ENCODE measurements at regions of chr17 and their contacts with region 1.

Region 1: DNA sequence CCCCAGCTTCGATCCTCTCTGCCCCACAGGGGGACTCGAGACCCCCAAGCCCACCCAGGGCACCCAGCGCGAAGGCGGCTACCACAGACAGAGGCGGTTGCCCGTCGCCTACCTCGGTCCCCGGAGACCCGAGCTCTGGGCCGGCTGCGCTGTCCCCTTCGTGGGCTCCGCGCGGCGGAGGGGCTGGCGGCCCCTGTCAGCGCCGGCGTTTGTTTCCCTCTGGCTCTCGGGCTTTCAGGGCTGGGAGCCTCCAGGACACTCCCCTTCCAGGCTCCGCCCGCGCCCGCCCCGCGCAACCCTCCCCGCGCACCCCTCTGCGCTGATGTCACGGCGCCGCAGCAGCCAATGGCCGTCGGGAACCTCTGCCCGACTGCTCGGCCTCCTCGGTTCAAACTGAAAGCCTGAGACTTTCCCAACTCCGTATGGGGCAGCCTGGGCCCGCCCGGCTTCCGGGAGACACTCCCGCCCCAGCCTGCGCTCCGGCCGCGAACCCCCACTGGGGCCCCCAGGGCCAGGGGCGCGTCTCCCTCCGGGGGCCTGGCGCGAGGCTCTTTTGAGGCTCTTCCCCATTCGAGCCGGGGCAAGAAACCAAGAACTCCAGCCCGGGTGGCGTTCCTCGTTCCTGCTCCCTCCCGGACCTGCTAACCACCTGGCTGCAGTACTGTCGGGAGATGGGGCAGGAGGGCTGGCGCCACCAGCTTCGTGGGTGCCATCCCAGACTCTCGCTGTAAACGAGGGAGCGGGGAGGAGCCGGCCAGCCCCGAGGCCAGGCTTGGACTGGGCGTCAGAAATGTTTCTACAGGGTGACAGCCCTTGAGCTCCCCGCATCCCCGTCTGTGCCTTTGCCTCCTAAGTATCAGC is at the start of gene CDC42EP4:
- DNase-seq: peak; percentile 96
- H3K4me3 ChIP-seq: peak within 1 kb of the TSS; percentile 68 to 94 (median 88)
- H3K27ac ChIP-seq: peak within 1 kb of the TSS; percentile 88
- H3K4me1 ChIP-seq: peaks cover 30% of the 10 kb centered on the region
- H3K27me3 ChIP-seq: no peaks in the 10 kb centered on the region
- CTCF ChIP-seq: no peak
- total RNA-seq, gene CDC42EP4: 21.4 to 25.3 TPM

Region 2: GRCh38 chr17:73192894-73193701 is 118.9 kb before region 1 on chr17 and contains the start of gene COG1:
- CTCF ChIA-PET with region 1: no interaction called
- dilution Hi-C with region 1: no loop called
- in situ Hi-C with region 1: no loop called
- intact Hi-C with region 1: loop called (anchors 5 kb)
- DNase-seq: peak; percentile 86
- H3K4me3 ChIP-seq: peak within 1 kb of the TSS; percentile 73 to 96 (median 80)
- H3K27ac ChIP-seq: peak within 1 kb of the TSS; percentile 57
- H3K4me1 ChIP-seq: peaks cover 4% of the 10 kb centered on the region
- H3K27me3 ChIP-seq: no peaks in the 10 kb centered on the region
- CTCF ChIP-seq: no peak
- total RNA-seq, gene COG1: 23.3 to 35.2 TPM

Region 3: GRCh38 chr17:73255671-73256181 is 56.3 kb before region 1 on chr17:
- CTCF ChIA-PET with region 1: interaction called, 8 read pairs
- dilution Hi-C with region 1: no loop called
- in situ Hi-C with region 1: no loop called
- intact Hi-C with region 1: loop called (anchors 1 kb)
- DNase-seq: peak; percentile 53
- H3K4me3 ChIP-seq: no peak overlapping the region
- H3K27ac ChIP-seq: no peak overlapping the region
- H3K4me1 ChIP-seq: no peaks in the 10 kb centered on the region
- H3K27me3 ChIP-seq: no peaks in the 10 kb centered on the region
- CTCF ChIP-seq: peak; percentile 93 to 99

Region 4: GRCh38 chr17:73261952-73262675 is 49.9 kb before region 1 on chr17:
- CTCF ChIA-PET with region 1: no interaction called
- dilution Hi-C with region 1: no loop called
- in situ Hi-C with region 1: no loop called
- intact Hi-C with region 1: loop called (anchors 2 kb)
- DNase-seq: peak; percentile 71
- H3K4me3 ChIP-seq: peak overlapping the region in 1 of 3 experiments; percentile 16
- H3K27ac ChIP-seq: peak overlapping the region; percentile 35
- H3K4me1 ChIP-seq: peaks cover 16% of the 10 kb centered on the region
- H3K27me3 ChIP-seq: no peaks in the 10 kb centered on the region
- CTCF ChIP-seq: no peak

Region 5: DNA sequence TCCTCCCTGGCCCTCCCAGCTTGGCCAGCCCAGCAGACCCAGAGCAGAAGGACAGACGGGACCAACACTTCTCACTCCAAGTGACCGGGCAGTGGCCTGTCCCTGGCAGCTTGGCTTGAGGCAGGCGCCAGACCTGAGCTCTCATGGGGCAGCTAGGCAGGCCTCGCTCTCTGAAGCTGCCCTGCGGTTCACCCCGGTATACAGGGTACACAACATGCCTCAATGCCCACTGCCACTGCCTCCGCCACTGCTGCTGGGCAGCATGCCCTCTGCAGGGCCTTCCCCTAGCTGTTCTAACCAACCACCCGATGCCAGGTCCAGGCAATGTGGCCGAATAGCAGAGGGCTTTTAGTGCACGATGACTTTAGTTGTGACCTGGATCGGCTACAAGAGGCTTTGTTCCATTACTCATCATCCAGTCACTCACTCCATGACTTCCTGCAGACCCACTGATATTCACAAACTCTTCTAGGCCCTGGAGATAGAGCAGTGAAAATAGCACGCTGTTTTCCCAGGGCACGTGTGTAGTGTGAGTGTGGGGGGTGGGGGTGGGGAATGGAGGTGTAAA is 20.0 kb before region 1 on chr17:
- CTCF ChIA-PET with region 1: interaction called, 5 read pairs
- dilution Hi-C with region 1: no loop called
- in situ Hi-C with region 1: no loop called
- intact Hi-C with region 1: loop called (anchors 2 kb)
- DNase-seq: peak; percentile 60
- H3K4me3 ChIP-seq: peak overlapping the region in 2 of 3 experiments; percentile 7 to 15
- H3K27ac ChIP-seq: peak overlapping the region; percentile 66
- H3K4me1 ChIP-seq: peaks cover 51% of the 10 kb centered on the region
- H3K27me3 ChIP-seq: no peaks in the 10 kb centered on the region
- CTCF ChIP-seq: no peak

Region 6: GRCh38 chr17:73325527-73325842 is 13.5 kb after region 1 on chr17:
- CTCF ChIA-PET with region 1: no interaction called
- dilution Hi-C with region 1: no loop called
- in situ Hi-C with region 1: no loop called
- intact Hi-C with region 1: no loop called
- DNase-seq: no peak
- H3K4me3 ChIP-seq: no peak overlapping the region
- H3K27ac ChIP-seq: no peak overlapping the region
- H3K4me1 ChIP-seq: peaks cover 14% of the 10 kb centered on the region
- H3K27me3 ChIP-seq: no peaks in the 10 kb centered on the region
- CTCF ChIP-seq: peak in 1 of 2 donors; percentile 8

Region 7: GRCh38 chr17:73342050-73342522 is 30.1 kb after region 1 on chr17:
- CTCF ChIA-PET with region 1: no interaction called
- dilution Hi-C with region 1: no loop called
- in situ Hi-C with region 1: no loop called
- intact Hi-C with region 1: loop called (anchors 1 kb)
- DNase-seq: peak; percentile 96
- H3K4me3 ChIP-seq: no peak overlapping the region
- H3K27ac ChIP-seq: peak overlapping the region; percentile 96
- H3K4me1 ChIP-seq: peaks cover 33% of the 10 kb centered on the region
- H3K27me3 ChIP-seq: no peaks in the 10 kb centered on the region
- CTCF ChIP-seq: no peak

Region 8: GRCh38 chr17:73371285-73371684 is 59.3 kb after region 1 on chr17:
- CTCF ChIA-PET with region 1: interaction called, 12 read pairs
- dilution Hi-C with region 1: no loop called
- in situ Hi-C with region 1: no loop called
- intact Hi-C with region 1: loop called (anchors 1 kb)
- DNase-seq: peak; percentile 71
- H3K4me3 ChIP-seq: no peak overlapping the region
- H3K27ac ChIP-seq: no peak overlapping the region
- H3K4me1 ChIP-seq: peaks cover 6% of the 10 kb centered on the region
- H3K27me3 ChIP-seq: no peaks in the 10 kb centered on the region
- CTCF ChIP-seq: no peak